ENCODE measurements at regions of chr16 and their contacts with region 1.

Region 1: GRCh38 chr16:30805370-30806169 is 18.6 kb upstream of the ZNF629 start:
- DNase-seq: peak; percentile 81
- H3K4me3 Mint-ChIP-seq: peak overlapping the region; percentile 85
- H3K27ac Mint-ChIP-seq: peak overlapping the region; percentile 82
- H3K4me1 Mint-ChIP-seq: peaks cover 10% of the 10 kb centered on the region
- H3K27me3 Mint-ChIP-seq: no peaks in the 10 kb centered on the region
- CTCF ChIP-seq: no peak

Region 2: DNA sequence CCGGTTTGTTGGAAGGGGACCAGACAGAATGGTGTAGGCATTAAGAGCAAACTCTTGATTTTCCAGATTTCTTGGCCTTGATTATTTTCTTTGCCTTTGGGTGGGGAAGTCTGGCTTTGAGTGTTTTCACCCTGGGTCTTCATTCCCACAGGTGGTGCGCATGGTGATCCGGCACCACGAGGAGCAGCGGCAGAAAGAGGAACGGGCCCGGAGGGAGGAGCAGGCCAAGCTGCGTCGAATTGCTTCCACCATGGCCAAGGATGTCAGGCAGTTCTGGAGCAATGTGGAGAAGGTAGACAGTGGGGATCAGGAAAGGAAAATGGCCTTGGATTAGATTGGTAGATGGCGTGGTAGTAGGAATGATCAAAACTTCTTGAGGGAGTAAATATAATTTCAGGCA is 98.1 kb before region 1 on chr16:
- CTCF ChIA-PET with region 1: no interaction called
- POLR2A ChIA-PET with region 1: no interaction called
- intact Hi-C with region 1: no loop called
- DNase-seq: no peak
- H3K4me3 Mint-ChIP-seq: no peak overlapping the region
- H3K27ac Mint-ChIP-seq: no peak overlapping the region
- H3K4me1 Mint-ChIP-seq: peaks cover 7% of the 10 kb centered on the region
- H3K27me3 Mint-ChIP-seq: no peaks in the 10 kb centered on the region
- CTCF ChIP-seq: no peak

Region 3: GRCh38 chr16:30740364-30741251 is 65.0 kb before region 1 on chr16:
- CTCF ChIA-PET with region 1: no interaction called
- POLR2A ChIA-PET with region 1: interaction called, 17 read pairs
- intact Hi-C with region 1: no loop called
- DNase-seq: peak; percentile 99
- H3K4me3 Mint-ChIP-seq: peak overlapping the region; percentile 89
- H3K27ac Mint-ChIP-seq: peak overlapping the region; percentile 85
- H3K4me1 Mint-ChIP-seq: peaks cover 36% of the 10 kb centered on the region
- H3K27me3 Mint-ChIP-seq: no peaks in the 10 kb centered on the region
- CTCF ChIP-seq: no peak

Region 4: DNA sequence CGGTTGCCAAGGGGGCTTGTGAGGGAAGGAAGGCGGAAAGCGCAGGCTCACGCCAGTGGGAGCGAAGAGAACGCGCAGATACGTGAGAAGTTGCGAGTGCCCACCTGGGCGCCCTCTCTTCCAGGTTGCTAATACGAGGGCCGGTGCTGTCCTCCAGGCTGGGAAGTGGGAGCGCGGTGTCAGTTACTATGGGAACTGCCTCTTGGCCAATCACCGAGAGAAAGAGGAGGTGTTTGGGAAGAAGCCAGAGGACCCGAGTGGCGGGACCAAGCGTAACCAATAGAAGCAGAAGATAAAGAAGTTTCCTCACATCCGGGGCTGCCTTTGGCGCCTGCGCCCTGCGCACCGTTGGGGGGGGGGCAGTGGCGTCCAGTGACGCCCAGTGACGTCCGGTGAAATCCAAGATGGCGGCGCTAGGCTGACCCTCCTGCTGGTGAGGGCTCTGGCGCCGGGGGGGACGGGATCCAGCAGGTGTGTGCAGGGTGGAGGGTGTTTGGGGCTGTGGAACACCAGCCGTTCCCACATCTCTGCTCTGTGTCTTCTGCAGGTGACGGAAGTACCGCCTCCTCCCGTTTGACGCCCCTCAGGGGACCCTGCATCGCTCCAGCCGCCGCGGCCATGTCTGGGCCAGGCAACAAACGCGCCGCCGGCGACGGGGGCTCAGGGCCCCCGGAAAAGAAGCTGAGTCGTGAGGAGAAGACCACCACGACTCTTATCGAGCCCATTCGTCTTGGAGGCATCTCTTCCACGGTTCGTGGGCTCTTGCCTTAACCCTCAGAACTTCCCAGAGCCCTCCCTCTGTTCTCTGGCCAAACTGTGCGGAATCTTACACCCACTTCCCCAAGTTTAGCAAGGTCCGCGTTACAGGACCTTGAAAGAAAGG is 43.4 kb before region 1 on chr16 and contains the starts of genes CFAP119 and RNF40:
- CTCF ChIA-PET with region 1: interaction called, 6 read pairs
- POLR2A ChIA-PET with region 1: interaction called, 18 read pairs
- intact Hi-C with region 1: no loop called
- DNase-seq: peak; percentile 98
- H3K4me3 Mint-ChIP-seq: peak within 1 kb of the TSS; percentile 87
- H3K27ac Mint-ChIP-seq: peak within 1 kb of the TSS; percentile 88
- H3K4me1 Mint-ChIP-seq: peaks cover 17% of the 10 kb centered on the region
- H3K27me3 Mint-ChIP-seq: no peaks in the 10 kb centered on the region
- CTCF ChIP-seq: no peak
- total RNA-seq, gene CFAP119: 4.8 and 5.2 TPM in 2 replicates
- total RNA-seq, gene RNF40: 78.0 and 85.0 TPM in 2 replicates

Region 5: GRCh38 chr16:30786936-30787612 is 18.5 kb before region 1 on chr16 and contains the start of gene ZNF629:
- CTCF ChIA-PET with region 1: interaction called, 4 read pairs
- POLR2A ChIA-PET with region 1: interaction called, 123 read pairs
- intact Hi-C with region 1: loop called (anchors 1 kb)
- DNase-seq: peak; percentile 59
- H3K4me3 Mint-ChIP-seq: peak within 1 kb of the TSS; percentile 84
- H3K27ac Mint-ChIP-seq: peak within 1 kb of the TSS; percentile 81
- H3K4me1 Mint-ChIP-seq: peaks cover 10% of the 10 kb centered on the region
- H3K27me3 Mint-ChIP-seq: no peaks in the 10 kb centered on the region
- CTCF ChIP-seq: no peak
- total RNA-seq, gene ZNF629: 10.9 and 14.1 TPM in 2 replicates

Region 6: DNA sequence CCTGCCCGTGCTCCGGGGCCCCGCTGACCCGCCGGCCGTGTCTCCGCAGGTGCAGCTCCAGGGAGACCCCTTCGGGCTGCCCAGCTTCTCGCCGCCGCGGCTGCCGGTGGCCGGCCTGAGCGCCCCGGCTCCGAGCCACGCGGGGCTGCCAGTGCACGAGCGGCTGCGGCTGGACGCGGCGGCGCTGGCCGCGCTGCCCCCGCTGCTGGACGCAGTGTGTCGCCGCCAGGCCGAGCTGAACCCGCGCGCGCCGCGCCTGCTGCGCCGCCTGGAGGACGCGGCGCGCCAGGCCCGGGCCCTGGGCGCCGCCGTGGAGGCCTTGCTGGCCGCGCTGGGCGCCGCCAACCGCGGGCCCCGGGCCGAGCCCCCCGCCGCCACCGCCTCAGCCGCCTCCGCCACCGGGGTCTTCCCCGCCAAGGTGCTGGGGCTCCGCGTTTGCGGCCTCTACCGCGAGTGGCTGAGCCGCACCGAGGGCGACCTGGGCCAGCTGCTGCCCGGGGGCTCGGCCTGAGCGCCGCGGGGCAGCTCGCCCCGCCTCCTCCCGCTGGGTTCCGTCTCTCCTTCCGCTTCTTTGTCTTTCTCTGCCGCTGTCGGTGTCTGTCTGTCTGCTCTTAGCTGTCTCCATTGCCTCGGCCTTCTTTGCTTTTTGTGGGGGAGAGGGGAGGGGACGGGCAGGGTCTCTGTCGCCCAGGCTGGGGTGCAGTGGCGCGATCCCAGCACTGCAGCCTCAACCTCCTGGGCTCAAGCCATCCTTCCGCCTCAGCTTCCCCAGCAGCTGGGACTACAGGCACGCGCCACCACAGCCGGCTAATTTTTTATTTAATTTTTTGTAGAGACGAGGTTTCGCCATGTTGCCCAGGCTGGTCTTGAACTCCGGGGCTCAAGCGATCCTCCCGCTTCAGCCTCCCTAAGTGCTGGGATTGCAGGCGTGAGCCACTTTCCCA is 96.7 kb after region 1 on chr16:
- CTCF ChIA-PET with region 1: interaction called, 15 read pairs
- POLR2A ChIA-PET with region 1: interaction called, 7 read pairs
- intact Hi-C with region 1: no loop called
- DNase-seq: peak; percentile 57
- H3K4me3 Mint-ChIP-seq: peak overlapping the region; percentile 75
- H3K27ac Mint-ChIP-seq: peak overlapping the region; percentile 55
- H3K4me1 Mint-ChIP-seq: peaks cover under 1% of the 10 kb centered on the region
- H3K27me3 Mint-ChIP-seq: no peaks in the 10 kb centered on the region
- CTCF ChIP-seq: no peak

Measured in MCF 10A (cell line).